ENCODE measurements at regions of chr22 and their contacts with region 1.

Region 1: DNA sequence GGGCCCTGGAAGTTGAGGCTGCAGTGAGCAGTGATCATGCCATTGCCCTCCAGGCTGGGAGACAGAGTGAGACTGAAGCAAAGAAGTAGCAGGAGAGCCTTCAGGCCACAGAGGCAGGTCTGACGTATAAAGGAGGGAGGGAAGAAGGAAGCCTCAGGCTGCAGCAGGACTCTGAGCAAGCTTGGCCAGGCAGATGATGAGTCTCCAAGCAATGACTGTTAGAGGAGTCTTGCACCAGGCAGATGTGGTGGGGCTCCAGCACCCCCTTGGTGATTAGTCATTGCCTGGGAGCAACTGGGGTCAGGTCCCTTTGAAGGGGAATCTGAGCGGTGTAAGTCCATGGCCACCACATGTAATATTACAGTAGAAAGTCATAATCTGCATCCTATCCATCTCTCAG is 36.6 kb upstream of the NFAM1 start:
- DNase-seq: no peak
- H3K4me3 ChIP-seq: no peak overlapping the region
- H3K27ac ChIP-seq: no peak overlapping the region
- H3K4me1 ChIP-seq: no peaks in the 10 kb centered on the region
- CTCF ChIP-seq: no peak

Region 2: DNA sequence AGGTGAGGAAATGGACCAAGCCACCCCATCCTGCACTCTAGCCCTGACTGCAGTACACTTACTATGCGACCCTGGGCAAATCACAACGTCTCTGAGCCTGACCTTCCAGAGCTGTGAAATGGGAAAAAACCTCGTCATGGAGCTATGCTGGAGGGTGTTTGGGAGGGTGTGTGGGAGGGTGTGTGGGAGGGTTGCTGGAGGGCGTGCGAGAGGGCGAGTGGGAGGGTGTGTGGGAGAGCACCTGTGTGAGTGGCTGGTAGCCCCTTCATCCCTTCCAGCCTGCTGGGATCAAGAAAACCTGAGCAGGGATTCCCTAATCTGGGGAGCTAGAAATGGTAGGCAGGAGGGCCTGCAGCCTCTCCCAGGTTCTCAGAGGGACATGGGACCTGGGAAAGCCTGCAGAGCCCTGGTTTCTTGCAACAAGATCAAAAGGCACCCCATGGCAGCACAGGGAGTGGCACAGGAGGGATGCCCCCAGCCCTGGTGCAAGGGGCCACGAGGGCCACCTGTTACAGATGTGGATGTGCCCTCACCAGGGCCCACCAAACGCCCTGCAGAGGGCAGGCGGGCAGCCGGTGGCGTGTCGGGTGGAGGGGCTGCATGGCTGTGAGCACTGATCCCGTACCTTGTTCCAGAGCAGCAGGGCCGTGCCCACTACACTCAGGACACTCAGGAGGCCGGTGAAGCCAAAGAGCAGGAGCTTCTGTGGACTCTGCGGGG is 59.9 kb before region 1 on chr22:
- CTCF ChIA-PET with region 1: interaction called, 11 read pairs
- POLR2A ChIA-PET with region 1: no interaction called
- intact Hi-C with region 1: no loop called
- DNase-seq: no peak
- H3K4me3 ChIP-seq: no peak overlapping the region
- H3K27ac ChIP-seq: no peak overlapping the region
- H3K4me1 ChIP-seq: peaks cover 4% of the 10 kb centered on the region
- CTCF ChIP-seq: no peak

Region 3: DNA sequence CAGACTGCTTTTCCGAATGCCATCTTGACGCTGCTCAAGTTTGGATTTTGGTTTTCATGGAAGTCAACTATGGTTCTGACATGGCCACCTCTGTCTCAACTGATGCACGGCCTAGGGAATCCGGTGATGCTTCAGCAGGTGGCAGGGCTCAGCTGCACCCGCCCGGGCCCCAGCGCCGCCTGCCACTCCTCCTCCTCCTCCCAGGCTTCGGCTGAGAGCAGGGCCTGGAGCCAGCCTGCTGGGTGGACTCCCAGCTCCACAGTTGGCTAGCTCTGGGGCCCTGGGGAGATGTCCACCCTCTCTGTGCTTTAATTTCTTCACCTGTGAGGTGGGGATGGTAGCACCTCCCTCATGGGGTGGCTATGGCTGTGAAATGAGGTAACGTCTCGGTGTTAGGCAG is 16.4 kb before region 1 on chr22:
- CTCF ChIA-PET with region 1: no interaction called
- POLR2A ChIA-PET with region 1: no interaction called
- intact Hi-C with region 1: no loop called
- DNase-seq: no peak
- H3K4me3 ChIP-seq: no peak overlapping the region
- H3K27ac ChIP-seq: no peak overlapping the region
- H3K4me1 ChIP-seq: no peaks in the 10 kb centered on the region
- CTCF ChIP-seq: no peak

Measured in OCI-LY7 (cell line).